PC-3 (cell line): ENCODE measurements at regions of chr1 and their contacts with region 1.

Region 1: GRCh38 chr1:112674439-112674985 is at the start of gene MOV10:
- DNase-seq: peak; percentile 75
- ATAC-seq: peak; percentile 57
- H3K4me3 ChIP-seq: peak within 1 kb of the TSS; percentile 99
- H3K27ac ChIP-seq: peak within 1 kb of the TSS; percentile 53
- H3K4me1 ChIP-seq: peaks cover 24% of the 10 kb centered on the region
- H3K27me3 ChIP-seq: no peaks in the 10 kb centered on the region
- CTCF ChIP-seq: no peak
- total RNA-seq, gene MOV10: 68.5 and 71.6 TPM in 2 replicates

Region 2: DNA sequence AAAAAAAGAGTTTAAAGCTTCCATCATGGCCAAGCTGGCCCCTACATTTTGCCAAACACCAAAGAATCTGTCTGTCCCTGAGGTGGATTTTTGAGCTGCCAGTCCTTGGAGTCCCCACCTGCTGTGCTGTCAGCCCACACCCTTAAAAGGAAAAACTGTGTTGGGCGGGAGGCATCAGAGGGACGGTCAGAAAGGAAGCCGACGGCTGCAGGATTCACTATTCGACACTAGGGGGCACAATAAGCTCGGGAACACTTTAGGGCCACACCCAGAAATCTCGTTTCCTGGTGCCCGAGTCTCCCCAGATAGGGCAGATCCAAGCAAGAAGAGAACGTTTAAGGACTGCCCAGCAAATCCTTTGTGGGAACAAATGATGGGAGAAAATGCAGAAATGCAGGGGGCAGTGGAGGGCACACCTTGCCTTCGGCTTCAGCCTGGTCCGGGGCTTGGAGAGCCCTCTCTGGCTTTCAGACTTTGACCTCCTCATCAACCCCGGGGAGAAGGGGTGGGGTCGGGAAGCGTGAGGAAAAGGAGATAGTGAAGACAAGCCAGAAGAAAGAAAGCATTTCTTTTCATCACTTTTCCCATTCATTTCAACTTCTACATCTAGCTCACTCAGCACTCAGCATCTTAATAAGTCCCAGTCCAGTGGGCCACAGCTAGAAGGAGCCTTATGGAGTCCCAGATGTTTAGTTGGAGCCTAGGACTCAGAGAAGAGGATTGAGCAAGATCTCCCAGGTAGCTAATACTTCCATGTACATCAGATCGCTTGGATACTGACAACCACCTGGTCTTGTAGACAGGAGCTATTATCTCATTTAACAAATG is 283.5 kb before region 1 on chr1:
- CTCF ChIA-PET with region 1: no interaction called
- POLR2A ChIA-PET with region 1: interaction called, 4 read pairs
- intact Hi-C with region 1: loop called (anchors 5 kb)
- DNase-seq: peak; percentile 98
- ATAC-seq: peak; percentile 58
- H3K4me3 ChIP-seq: peak overlapping the region; percentile 74
- H3K27ac ChIP-seq: peak overlapping the region; percentile 34
- H3K4me1 ChIP-seq: peaks cover 32% of the 10 kb centered on the region
- H3K27me3 ChIP-seq: no peaks in the 10 kb centered on the region
- CTCF ChIP-seq: peak; percentile 94

Region 3: GRCh38 chr1:112501810-112502641 is 172.5 kb before region 1 on chr1:
- CTCF ChIA-PET with region 1: interaction called, 6 read pairs
- POLR2A ChIA-PET with region 1: no interaction called
- intact Hi-C with region 1: loop called (anchors 1 kb)
- DNase-seq: peak; percentile 64
- ATAC-seq: peak; percentile 85
- H3K4me3 ChIP-seq: peak overlapping the region; percentile 73
- H3K27ac ChIP-seq: no peak overlapping the region
- H3K4me1 ChIP-seq: no peaks in the 10 kb centered on the region; the same call in 1 of the 2 replicates
- H3K27me3 ChIP-seq: no peaks in the 10 kb centered on the region
- CTCF ChIP-seq: peak; percentile 74

Region 4: DNA sequence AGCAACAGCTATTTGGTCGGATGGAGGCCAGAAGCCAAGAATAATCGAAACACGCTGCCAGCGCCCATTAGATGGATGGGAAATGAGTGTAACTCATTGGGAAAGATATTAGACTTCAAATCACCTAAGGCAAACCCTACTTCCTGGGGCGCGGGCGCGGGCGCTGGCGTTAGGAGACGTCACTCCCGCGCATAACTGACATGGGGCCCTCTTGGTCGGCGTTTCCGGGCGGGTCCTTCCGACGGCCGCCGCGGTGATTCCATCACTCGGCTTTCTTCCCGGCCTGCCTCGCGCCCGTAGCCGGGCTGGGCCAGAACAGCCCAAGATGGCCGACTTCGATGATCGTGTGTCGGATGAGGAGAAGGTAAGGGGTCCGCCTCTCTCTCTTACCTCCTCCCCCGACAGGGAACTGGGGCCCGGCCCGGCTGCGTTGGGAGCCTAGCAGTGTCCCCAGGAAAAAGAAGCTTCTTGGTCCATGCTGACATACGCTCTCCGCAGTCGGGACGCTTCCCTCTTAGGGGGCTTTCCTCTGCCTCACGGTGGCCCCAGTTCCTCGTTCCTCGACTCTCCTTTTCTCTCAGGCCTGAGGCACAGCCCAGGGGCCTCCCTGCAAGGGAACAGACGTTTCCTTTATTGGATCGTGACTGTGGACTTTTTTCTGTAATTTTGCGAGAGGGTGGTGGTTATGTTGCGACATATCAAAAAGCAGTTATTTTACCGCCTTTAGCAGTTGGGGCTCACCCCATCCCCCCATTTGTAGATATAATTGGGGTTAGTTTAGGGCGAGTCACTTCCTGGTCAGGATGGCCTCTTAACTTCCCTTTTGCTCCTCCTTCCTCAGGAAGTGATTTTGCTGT is 54.8 kb before region 1 on chr1 and contains the start of gene CAPZA1:
- CTCF ChIA-PET with region 1: interaction called, 6 read pairs
- POLR2A ChIA-PET with region 1: no interaction called
- intact Hi-C with region 1: loop called (anchors 1 kb)
- DNase-seq: peak; percentile 90
- ATAC-seq: peak; percentile 85
- H3K4me3 ChIP-seq: peak within 1 kb of the TSS; percentile 90
- H3K27ac ChIP-seq: peak within 1 kb of the TSS; percentile 93
- H3K4me1 ChIP-seq: peaks cover 22% of the 10 kb centered on the region
- H3K27me3 ChIP-seq: no peaks in the 10 kb centered on the region
- CTCF ChIP-seq: no peak
- total RNA-seq, gene CAPZA1: 177 and 273 TPM in 2 replicates

Region 5: GRCh38 chr1:112637254-112638116 is 37.0 kb before region 1 on chr1:
- CTCF ChIA-PET with region 1: no interaction called
- POLR2A ChIA-PET with region 1: no interaction called
- intact Hi-C with region 1: loop called (anchors 5 kb)
- DNase-seq: peak; percentile 26
- ATAC-seq: peak; percentile 78
- H3K4me3 ChIP-seq: no peak overlapping the region
- H3K27ac ChIP-seq: peak overlapping the region; percentile 50
- H3K4me1 ChIP-seq: peaks cover 28% of the 10 kb centered on the region
- H3K27me3 ChIP-seq: no peaks in the 10 kb centered on the region
- CTCF ChIP-seq: no peak